PC-3 (cell line): ENCODE measurements at regions of chr11 and their contacts with region 1.

Region 1: GRCh38 chr11:8263769-8264410 is at the start of gene LMO1:
- DNase-seq: peak; percentile 80
- ATAC-seq: peak; percentile 86
- H3K4me3 ChIP-seq: peak within 1 kb of the TSS; percentile 56
- H3K27ac ChIP-seq: no peak within 1 kb of the TSS
- H3K4me1 ChIP-seq: no peaks in the 10 kb centered on the region
- H3K27me3 ChIP-seq: peaks cover 43% of the 10 kb centered on the region
- CTCF ChIP-seq: peak; percentile 88
- total RNA-seq, gene LMO1: 0.15 TPM in 1 of 2 replicates, not detected in the other

Region 2: DNA sequence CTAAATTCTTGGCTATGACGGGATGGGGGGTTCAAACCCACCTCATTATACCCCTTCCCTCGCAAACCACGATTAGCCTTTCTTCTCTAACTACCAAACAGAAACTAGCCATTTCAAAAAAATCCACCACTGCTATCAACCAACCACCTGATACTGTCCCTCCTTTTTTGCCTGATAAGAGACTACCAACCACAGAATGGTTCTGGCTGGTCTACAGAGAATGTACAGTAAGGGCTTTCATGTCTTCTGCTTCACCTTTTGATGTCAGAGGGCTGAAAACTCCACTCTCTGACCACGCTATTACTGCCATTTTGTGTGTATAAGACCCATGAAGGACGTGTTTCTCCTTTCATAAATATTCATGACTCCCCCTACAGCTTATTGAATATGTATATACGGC is 114.2 kb before region 1 on chr11:
- CTCF ChIA-PET with region 1: no interaction called
- POLR2A ChIA-PET with region 1: no interaction called
- intact Hi-C with region 1: no loop called
- DNase-seq: no peak
- ATAC-seq: no peak
- H3K4me3 ChIP-seq: no peak overlapping the region
- H3K27ac ChIP-seq: no peak overlapping the region
- H3K4me1 ChIP-seq: no peaks in the 10 kb centered on the region
- H3K27me3 ChIP-seq: peaks cover 57% of the 10 kb centered on the region
- CTCF ChIP-seq: no peak

Region 3: GRCh38 chr11:8225589-8226036 is 38.3 kb before region 1 on chr11:
- CTCF ChIA-PET with region 1: no interaction called
- POLR2A ChIA-PET with region 1: no interaction called
- intact Hi-C with region 1: loop called (anchors 1 kb)
- DNase-seq: peak; percentile 70
- ATAC-seq: peak; percentile 57
- H3K4me3 ChIP-seq: no peak overlapping the region
- H3K27ac ChIP-seq: no peak overlapping the region
- H3K4me1 ChIP-seq: peaks cover 32% of the 10 kb centered on the region
- H3K27me3 ChIP-seq: peaks cover 8% of the 10 kb centered on the region; the same call in 1 of the 2 replicates
- CTCF ChIP-seq: peak; percentile 93

Region 4: GRCh38 chr11:8477680-8478079 is 213.8 kb after region 1 on chr11:
- CTCF ChIA-PET with region 1: no interaction called
- POLR2A ChIA-PET with region 1: no interaction called
- intact Hi-C with region 1: no loop called
- DNase-seq: no peak
- ATAC-seq: no peak
- H3K4me3 ChIP-seq: no peak overlapping the region
- H3K27ac ChIP-seq: no peak overlapping the region
- H3K4me1 ChIP-seq: no peaks in the 10 kb centered on the region
- H3K27me3 ChIP-seq: peaks cover 50% of the 10 kb centered on the region
- CTCF ChIP-seq: no peak